ENCODE measurements at regions of chr15 and their contacts with region 1.

Region 1: GRCh38 chr15:68304589-68305337 is 27.2 kb downstream of the FEM1B start:
- DNase-seq: no peak
- ATAC-seq: no peak
- H3K4me3 ChIP-seq: no peak overlapping the region
- H3K27ac ChIP-seq: no peak overlapping the region
- H3K4me1 ChIP-seq: peaks cover 11% of the 10 kb centered on the region
- H3K27me3 ChIP-seq: no peaks in the 10 kb centered on the region
- CTCF ChIP-seq: no peak
- POLR2A ChIP-seq: no peak
- RAD21 ChIP-seq: no peak

Region 2: DNA sequence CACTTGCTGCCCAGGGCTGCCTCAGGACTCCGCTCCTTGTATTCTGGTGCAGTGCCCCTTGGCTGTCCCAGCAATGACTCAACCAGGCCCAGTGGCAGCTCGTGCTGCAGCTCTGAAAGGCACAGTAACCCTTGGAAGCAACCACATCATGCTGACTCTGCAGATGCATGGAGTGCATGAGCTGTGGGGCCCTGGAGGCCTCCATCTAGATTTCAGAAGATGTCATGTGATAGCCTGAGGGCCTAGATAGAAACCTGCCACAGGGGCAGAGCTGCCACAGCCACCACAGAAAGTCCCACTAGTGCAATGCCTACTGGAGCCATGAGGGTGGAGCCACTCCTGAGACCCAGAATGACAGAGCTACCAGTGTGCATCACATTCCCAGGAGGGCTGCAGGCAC is 1356.5 kb before region 1 on chr15:
- CTCF ChIA-PET with region 1: no interaction called
- POLR2A ChIA-PET with region 1: no interaction called
- dilution Hi-C with region 1: no loop called
- in situ Hi-C with region 1: no loop called
- intact Hi-C with region 1: no loop called
- DNase-seq: peak; percentile 50
- ATAC-seq: peak; percentile 67
- H3K4me3 ChIP-seq: no peak overlapping the region
- H3K27ac ChIP-seq: no peak overlapping the region
- H3K4me1 ChIP-seq: no peaks in the 10 kb centered on the region; the same call in none of the 2 replicates
- H3K27me3 ChIP-seq: no peaks in the 10 kb centered on the region
- CTCF ChIP-seq: no peak
- POLR2A ChIP-seq: no peak
- RAD21 ChIP-seq: 0 out of 2 replicates have a peak, but pooled peaks have one; percentile 19

Region 3: DNA sequence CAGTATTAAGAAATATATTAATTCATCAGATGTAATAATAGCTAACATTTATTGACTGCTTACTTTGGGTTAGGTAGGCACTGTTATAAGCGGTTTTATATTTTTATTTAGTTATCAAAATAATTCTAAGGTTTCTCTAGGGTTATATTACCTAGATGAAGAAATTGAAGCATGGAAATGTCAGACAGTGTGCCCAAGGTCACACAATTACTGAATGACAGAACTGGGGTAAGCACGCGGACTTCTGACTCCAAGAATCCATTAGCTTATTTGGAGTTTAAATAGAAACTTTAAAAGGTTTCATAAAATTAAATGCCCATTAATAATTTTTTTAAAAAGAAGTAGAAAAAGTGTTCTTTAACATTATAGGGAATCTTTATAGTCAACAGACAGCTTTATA is 173.9 kb before region 1 on chr15:
- CTCF ChIA-PET with region 1: no interaction called
- POLR2A ChIA-PET with region 1: no interaction called
- dilution Hi-C with region 1: no loop called
- in situ Hi-C with region 1: no loop called
- intact Hi-C with region 1: no loop called
- DNase-seq: no peak
- ATAC-seq: no peak
- H3K4me3 ChIP-seq: no peak overlapping the region
- H3K27ac ChIP-seq: no peak overlapping the region
- H3K4me1 ChIP-seq: peaks cover 2% of the 10 kb centered on the region; the same call in 1 of the 2 replicates
- H3K27me3 ChIP-seq: no peaks in the 10 kb centered on the region
- CTCF ChIP-seq: no peak
- POLR2A ChIP-seq: no peak
- RAD21 ChIP-seq: no peak

Region 4: GRCh38 chr15:68383161-68384074 is 78.7 kb after region 1 on chr15:
- CTCF ChIA-PET with region 1: interaction called, 4 read pairs
- POLR2A ChIA-PET with region 1: no interaction called
- dilution Hi-C with region 1: no loop called
- in situ Hi-C with region 1: no loop called
- intact Hi-C with region 1: loop called (anchors 1 kb)
- DNase-seq: peak; percentile 31
- ATAC-seq: no peak
- H3K4me3 ChIP-seq: no peak overlapping the region
- H3K27ac ChIP-seq: peak overlapping the region; percentile 86
- H3K4me1 ChIP-seq: peaks cover 47% of the 10 kb centered on the region
- H3K27me3 ChIP-seq: no peaks in the 10 kb centered on the region
- CTCF ChIP-seq: peak; percentile 66
- POLR2A ChIP-seq: no peak
- RAD21 ChIP-seq: peak; percentile 56

Region 5: DNA sequence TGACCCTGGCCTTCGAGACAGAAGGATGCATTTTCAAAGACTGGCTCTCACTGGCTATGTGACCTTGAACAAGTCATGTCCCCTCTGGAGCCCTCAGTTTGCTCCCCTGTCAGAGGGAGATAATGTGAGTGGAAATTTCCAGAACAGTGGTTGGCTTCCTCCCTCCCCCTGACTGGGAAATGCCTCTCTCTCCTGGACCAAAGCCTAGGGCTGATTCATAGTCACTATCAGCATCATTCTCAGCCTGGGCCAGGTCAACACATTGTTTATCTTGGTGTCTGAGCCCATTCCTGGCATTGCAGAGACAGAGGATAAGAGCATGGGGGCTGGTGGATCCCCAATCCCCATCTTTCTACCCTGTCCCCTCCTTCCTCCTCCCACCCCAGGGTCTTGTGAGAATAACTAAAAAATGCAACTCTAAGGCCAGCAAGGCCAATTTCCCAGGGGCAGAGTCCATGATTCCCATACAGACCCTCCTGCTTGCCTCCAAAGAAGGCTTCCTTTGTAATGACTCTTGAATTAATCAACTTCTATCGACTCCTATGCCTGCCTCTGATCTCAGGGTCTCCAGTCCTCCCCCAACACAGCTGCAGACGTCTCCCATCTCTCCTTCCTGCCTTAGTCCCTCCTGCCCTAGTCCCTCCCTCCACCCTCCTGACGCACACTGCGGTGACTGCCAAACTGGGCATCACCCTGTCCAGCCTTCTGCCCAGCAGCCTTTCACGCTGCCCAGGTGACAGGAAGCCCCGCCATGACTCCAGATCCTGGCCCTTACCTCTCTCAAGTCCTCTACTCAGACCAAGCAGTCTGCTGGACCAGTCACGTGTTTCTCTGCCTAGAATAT is 238.6 kb after region 1 on chr15:
- CTCF ChIA-PET with region 1: interaction called, 3 read pairs
- POLR2A ChIA-PET with region 1: no interaction called
- dilution Hi-C with region 1: no loop called
- in situ Hi-C with region 1: no loop called
- intact Hi-C with region 1: loop called (anchors 1 kb)
- DNase-seq: peak; percentile 96
- ATAC-seq: peak; percentile 90
- H3K4me3 ChIP-seq: no peak overlapping the region
- H3K27ac ChIP-seq: peak overlapping the region; percentile 82
- H3K4me1 ChIP-seq: peaks cover 15% of the 10 kb centered on the region
- H3K27me3 ChIP-seq: no peaks in the 10 kb centered on the region
- CTCF ChIP-seq: no peak
- POLR2A ChIP-seq: no peak
- RAD21 ChIP-seq: peak; percentile 12; the same call in 1 of the 2 replicates

Region 6: DNA sequence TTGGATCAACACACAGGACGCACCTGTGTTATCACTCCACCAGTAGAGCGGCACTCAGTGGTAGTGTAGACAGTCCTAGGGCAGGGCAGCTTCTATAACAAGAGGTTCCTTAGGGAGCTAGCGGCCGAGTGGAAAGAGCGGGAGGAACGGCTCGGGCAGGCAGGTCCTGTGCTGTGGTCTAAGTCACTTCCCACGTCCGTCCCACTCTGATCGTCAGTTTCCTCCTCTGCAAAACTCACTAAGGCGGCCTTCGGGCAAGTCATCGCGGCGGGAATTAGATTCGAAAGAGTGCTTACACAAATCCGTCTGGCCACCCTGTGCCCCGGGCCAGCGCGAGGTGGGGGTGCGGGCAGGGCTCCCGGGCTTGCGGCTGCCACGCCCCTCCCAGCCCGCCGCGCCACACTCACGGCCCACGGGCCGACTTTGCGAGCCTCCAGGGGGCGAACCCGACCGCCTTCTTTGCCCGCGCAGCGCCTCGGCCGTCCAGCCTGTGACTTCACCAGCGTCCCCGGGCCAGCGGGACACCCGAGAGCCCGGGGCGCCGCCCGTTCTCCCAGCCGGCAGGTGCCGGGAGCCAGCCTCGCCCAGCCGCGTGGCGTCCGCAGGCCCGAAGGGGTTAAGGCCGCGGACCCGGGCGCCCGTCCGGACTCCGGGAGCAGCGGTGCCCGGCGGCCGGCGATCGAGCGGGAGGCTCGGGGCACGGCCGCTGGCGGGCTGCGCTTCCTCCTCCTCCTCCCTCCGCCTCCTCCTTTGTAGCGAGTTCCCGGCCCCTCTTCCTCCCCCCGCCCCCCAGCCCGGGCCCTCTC is 273.6 kb after region 1 on chr15:
- CTCF ChIA-PET with region 1: no interaction called
- POLR2A ChIA-PET with region 1: no interaction called
- dilution Hi-C with region 1: no loop called
- in situ Hi-C with region 1: no loop called
- intact Hi-C with region 1: loop called (anchors 1 kb)
- DNase-seq: peak; percentile 71
- ATAC-seq: peak; percentile 86
- H3K4me3 ChIP-seq: peak overlapping the region; percentile 58
- H3K27ac ChIP-seq: peak overlapping the region; percentile 8; the same call in 1 of the 2 replicates
- H3K4me1 ChIP-seq: peaks cover 7% of the 10 kb centered on the region
- H3K27me3 ChIP-seq: peaks cover 2% of the 10 kb centered on the region
- CTCF ChIP-seq: peak; percentile 68
- POLR2A ChIP-seq: peak; percentile 26; the same call in 1 of the 2 replicates
- RAD21 ChIP-seq: peak; percentile 81

Region 7: DNA sequence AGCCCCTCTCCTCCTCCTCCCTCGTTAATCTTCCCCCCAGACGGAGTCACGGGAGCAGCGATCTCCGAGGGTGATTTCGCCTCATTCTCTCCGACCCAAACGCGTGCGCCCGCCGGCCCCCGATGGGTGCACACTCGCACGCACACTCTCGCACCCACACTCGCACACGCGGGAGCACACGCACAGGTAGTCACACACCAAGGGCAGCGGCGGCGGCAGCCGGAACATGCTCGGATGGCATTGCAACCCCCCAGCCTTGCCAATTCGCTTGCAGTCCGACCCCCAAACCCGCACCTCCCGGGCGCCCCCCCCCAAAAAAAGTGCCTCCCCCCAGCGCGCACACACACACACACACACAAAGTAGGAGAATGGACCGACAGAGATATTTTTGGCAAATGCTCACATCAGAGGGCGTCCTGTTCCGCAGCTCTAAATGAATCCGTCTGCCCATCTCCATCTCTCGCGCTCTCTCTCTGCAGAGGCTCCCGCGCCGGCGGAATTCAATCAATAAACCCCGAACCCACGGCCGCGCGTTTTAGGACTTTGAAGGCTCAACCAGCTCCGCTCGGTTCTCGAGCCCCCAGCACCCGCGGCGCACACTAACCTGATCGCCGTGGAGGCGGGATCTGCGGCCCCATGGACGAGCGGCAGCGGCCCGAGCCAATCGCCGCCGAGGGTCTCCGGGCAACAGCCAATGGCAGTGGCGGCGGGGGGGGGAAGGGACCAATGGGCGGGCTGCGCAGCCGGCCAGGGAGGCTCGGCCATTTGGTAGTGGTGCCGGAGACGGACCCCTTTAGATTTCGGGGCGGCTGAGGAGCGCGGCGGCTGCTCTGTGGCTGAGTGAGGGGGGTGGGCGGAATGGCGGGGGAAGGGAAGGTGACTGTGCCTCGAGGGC is 515.8 kb after region 1 on chr15 and contains the start of gene ANP32A:
- CTCF ChIA-PET with region 1: no interaction called
- POLR2A ChIA-PET with region 1: no interaction called
- dilution Hi-C with region 1: no loop called
- in situ Hi-C with region 1: no loop called
- intact Hi-C with region 1: loop called (anchors 10 kb)
- DNase-seq: peak; percentile 91
- ATAC-seq: peak; percentile 79
- H3K4me3 ChIP-seq: peak within 1 kb of the TSS; percentile 78
- H3K27ac ChIP-seq: peak within 1 kb of the TSS; percentile 87
- H3K4me1 ChIP-seq: peaks cover 9% of the 10 kb centered on the region
- H3K27me3 ChIP-seq: no peaks in the 10 kb centered on the region
- CTCF ChIP-seq: no peak
- POLR2A ChIP-seq: no peak
- RAD21 ChIP-seq: no peak
- total RNA-seq, gene ANP32A: 50.0 and 72.8 TPM in 2 replicates

Region 8: DNA sequence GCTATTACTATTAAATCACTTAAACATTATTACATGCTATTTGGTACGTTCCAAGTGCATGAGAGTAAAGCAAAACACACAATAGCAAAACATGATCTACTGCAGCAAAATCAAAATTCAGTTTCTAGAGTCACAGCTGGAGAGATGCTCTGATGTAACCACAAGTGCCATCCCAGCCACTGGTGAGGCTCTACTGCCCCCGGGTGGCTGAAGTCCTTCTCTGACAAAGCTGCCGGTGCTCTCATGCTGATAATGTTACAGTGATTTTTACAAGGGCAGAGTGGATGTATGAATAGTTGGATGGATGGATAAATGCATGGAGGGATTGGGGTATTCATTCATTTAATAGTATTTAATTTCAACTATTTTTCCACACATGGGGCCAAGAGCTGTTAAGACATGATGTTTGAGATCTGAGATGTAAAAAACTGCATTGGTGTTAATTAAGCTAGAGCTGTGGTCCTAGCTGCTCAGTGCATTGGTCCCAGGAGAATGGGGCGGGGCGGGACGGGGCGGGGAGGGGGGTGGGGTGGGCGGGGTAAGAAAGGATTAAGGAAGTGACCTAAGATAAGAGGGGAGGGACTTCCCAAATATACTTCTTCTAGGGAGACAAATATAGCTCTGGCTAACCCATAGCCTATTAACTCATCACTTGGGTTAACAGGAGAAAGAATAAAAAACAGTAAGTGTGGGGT is 620.2 kb after region 1 on chr15:
- CTCF ChIA-PET with region 1: interaction called, 3 read pairs
- POLR2A ChIA-PET with region 1: no interaction called
- dilution Hi-C with region 1: no loop called
- in situ Hi-C with region 1: no loop called
- intact Hi-C with region 1: loop called (anchors 2 kb)
- DNase-seq: peak; percentile 71
- ATAC-seq: peak; percentile 98
- H3K4me3 ChIP-seq: no peak overlapping the region
- H3K27ac ChIP-seq: no peak overlapping the region
- H3K4me1 ChIP-seq: no peaks in the 10 kb centered on the region
- H3K27me3 ChIP-seq: peaks cover 15% of the 10 kb centered on the region
- CTCF ChIP-seq: peak; percentile 93
- POLR2A ChIP-seq: no peak
- RAD21 ChIP-seq: peak; percentile 95

Region 9: DNA sequence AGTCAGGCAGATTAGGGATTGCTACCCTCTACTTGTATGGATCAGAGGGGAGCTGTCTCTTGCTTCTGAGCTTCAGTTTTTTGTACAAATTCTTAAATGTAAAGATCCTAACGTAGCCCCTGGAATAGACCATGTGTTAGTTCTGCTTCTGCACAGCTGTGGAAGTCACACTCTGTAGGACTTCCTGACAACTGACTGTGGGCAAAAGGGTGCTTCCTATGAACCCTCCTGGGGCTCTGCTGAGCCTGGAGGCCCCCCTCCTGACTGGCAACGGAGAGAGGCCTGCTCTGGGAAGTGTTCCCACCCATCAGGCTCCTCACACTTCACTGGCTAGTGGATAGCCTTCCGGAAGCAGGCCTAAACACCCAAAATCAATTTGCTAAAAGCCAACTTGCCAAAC is 1278.9 kb after region 1 on chr15:
- CTCF ChIA-PET with region 1: no interaction called
- POLR2A ChIA-PET with region 1: no interaction called
- dilution Hi-C with region 1: no loop called
- in situ Hi-C with region 1: no loop called
- intact Hi-C with region 1: no loop called
- DNase-seq: no peak
- ATAC-seq: no peak
- H3K4me3 ChIP-seq: no peak overlapping the region
- H3K27ac ChIP-seq: no peak overlapping the region
- H3K4me1 ChIP-seq: no peaks in the 10 kb centered on the region
- H3K27me3 ChIP-seq: peaks cover 60% of the 10 kb centered on the region
- CTCF ChIP-seq: no peak
- POLR2A ChIP-seq: no peak
- RAD21 ChIP-seq: no peak

Measured in IMR-90 (cell line).